IMR-90 (cell line): ENCODE measurements at regions of chr11 and their contacts with region 1.

Region 1: DNA sequence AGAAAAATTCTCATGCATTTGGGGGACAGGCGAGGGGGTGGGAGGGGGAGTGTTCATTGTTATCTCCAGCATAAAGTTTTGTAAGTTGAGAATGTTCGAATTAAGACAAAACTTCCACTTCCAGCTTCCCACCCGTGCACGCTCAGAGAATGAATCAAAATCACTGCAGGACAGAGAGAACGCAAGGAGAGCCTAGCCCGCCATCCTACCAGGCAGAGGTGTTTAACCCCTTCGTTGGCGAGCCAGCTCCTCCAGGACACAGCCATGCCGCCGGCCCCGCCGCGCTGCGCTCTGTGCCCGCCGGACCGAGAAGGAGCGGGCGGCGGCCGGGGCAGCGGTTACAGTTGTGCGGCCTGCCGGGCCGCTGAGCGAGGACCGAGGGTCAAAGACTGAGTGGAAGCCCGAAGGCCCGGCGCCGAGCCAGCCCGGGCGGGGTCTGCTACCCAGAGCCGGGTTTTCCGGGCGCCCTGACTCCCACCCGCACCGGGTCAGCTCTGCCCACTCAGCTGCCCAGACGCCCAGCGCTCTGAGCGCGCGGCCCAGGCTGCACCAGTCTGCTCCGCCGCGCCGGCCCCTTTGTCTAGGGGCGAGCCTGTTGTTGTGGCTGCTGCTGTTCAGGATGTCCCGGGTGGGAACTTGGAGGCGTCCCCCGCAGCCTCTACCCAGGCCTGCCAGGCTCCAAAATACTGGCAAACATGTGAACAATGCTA is at the start of gene NOX4:
- DNase-seq: peak; percentile 48
- ATAC-seq: peak; percentile 86
- H3K4me3 ChIP-seq: peak within 1 kb of the TSS; percentile 57
- H3K27ac ChIP-seq: peak within 1 kb of the TSS; percentile 66
- H3K4me1 ChIP-seq: peaks cover 16% of the 10 kb centered on the region
- H3K27me3 ChIP-seq: no peaks in the 10 kb centered on the region
- CTCF ChIP-seq: no peak
- POLR2A ChIP-seq: peak; percentile 66
- RAD21 ChIP-seq: no peak
- total RNA-seq, gene NOX4: 10.8 and 11.7 TPM in 2 replicates

Region 2: GRCh38 chr11:88103337-88104206 is 1387.6 kb before region 1 on chr11:
- CTCF ChIA-PET with region 1: no interaction called
- POLR2A ChIA-PET with region 1: no interaction called
- dilution Hi-C with region 1: no loop called
- in situ Hi-C with region 1: no loop called
- intact Hi-C with region 1: loop called (anchors 5 kb)
- DNase-seq: peak; percentile 58
- ATAC-seq: peak; percentile 61
- H3K4me3 ChIP-seq: no peak overlapping the region
- H3K27ac ChIP-seq: no peak overlapping the region
- H3K4me1 ChIP-seq: no peaks in the 10 kb centered on the region
- H3K27me3 ChIP-seq: no peaks in the 10 kb centered on the region
- CTCF ChIP-seq: peak; percentile 56
- POLR2A ChIP-seq: no peak
- RAD21 ChIP-seq: peak; percentile 48; the same call in 1 of the 2 replicates

Region 3: GRCh38 chr11:89275966-89276365 is 215.2 kb before region 1 on chr11:
- CTCF ChIA-PET with region 1: no interaction called
- POLR2A ChIA-PET with region 1: no interaction called
- dilution Hi-C with region 1: no loop called
- in situ Hi-C with region 1: no loop called
- intact Hi-C with region 1: no loop called
- DNase-seq: no peak
- ATAC-seq: no peak
- H3K4me3 ChIP-seq: no peak overlapping the region
- H3K27ac ChIP-seq: no peak overlapping the region
- H3K4me1 ChIP-seq: no peaks in the 10 kb centered on the region
- H3K27me3 ChIP-seq: no peaks in the 10 kb centered on the region
- CTCF ChIP-seq: no peak
- POLR2A ChIP-seq: no peak
- RAD21 ChIP-seq: no peak

Region 4: DNA sequence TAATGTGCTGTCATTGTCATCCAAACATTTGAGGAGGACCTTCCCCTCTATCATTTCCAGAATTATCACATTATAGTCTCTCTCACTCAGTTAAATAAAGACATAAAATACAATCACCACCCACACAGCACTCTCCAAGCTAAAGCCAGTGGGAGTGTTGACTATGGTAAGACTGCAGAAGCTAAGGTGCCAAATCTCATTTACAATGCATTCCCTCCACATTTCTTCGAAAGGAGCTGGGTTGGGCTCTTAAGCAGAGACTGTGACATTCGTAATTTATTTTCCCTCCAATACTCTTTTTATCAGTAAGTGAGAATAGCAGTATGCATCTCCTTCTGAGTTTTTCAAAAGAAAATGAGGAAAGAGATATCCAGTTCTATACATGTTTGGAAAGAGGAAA is 74.2 kb before region 1 on chr11:
- CTCF ChIA-PET with region 1: no interaction called
- POLR2A ChIA-PET with region 1: no interaction called
- dilution Hi-C with region 1: no loop called
- in situ Hi-C with region 1: no loop called
- intact Hi-C with region 1: no loop called
- DNase-seq: no peak
- ATAC-seq: no peak
- H3K4me3 ChIP-seq: no peak overlapping the region
- H3K27ac ChIP-seq: no peak overlapping the region
- H3K4me1 ChIP-seq: no peaks in the 10 kb centered on the region
- H3K27me3 ChIP-seq: no peaks in the 10 kb centered on the region
- CTCF ChIP-seq: no peak
- POLR2A ChIP-seq: no peak
- RAD21 ChIP-seq: no peak

Region 5: DNA sequence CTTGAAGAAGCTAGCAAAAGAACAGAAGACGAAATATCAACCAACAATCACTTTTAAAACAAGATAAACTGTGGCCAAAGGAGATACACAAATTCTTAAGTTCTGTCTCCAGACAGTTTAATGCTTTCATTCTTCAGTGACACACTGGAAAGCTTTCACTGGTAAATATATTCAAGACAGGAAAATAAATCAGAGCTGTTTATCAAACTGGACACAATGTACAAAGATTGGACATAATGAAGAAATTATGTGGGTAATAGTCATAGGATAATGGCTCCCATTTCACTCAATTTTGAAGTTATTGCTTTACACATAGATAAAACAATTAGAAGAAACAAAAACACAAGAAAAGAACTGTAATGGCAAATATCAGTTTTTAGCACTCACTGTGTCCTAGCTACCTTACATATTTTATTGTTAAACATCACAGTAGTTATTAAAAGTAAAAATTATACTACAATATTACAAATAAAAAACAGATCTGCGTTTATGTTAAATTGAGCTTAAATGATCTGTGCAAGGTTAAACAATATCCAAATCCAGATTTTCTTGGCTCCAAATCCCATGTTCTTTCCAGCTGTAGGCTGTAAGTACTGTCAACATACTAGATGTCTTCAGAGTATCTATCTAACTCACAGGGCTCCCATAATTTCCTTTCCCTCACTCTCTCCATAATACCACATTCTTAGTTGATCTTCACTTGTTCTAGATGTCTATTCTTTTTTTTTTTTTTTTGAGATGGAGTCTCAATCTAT is 38.7 kb after region 1 on chr11:
- CTCF ChIA-PET with region 1: no interaction called
- POLR2A ChIA-PET with region 1: no interaction called
- dilution Hi-C with region 1: no loop called
- in situ Hi-C with region 1: no loop called
- intact Hi-C with region 1: no loop called
- DNase-seq: no peak
- ATAC-seq: no peak
- H3K4me3 ChIP-seq: no peak overlapping the region
- H3K27ac ChIP-seq: no peak overlapping the region
- H3K4me1 ChIP-seq: no peaks in the 10 kb centered on the region
- H3K27me3 ChIP-seq: no peaks in the 10 kb centered on the region
- CTCF ChIP-seq: no peak
- POLR2A ChIP-seq: no peak
- RAD21 ChIP-seq: no peak